Calu3 (cell line): ENCODE measurements at regions of chr17 and their contacts with region 1.

Region 1: GRCh38 chr17:43907425-43907981 is at the start of gene MPP2:
- DNase-seq: peak; percentile 57
- H3K4me3 Mint-ChIP-seq: peak within 1 kb of the TSS; percentile 50
- H3K27ac Mint-ChIP-seq: no peak within 1 kb of the TSS
- H3K4me1 Mint-ChIP-seq: peaks cover 14% of the 10 kb centered on the region
- H3K27me3 Mint-ChIP-seq: peaks cover 73% of the 10 kb centered on the region
- CTCF ChIP-seq: peak; percentile 34
- total RNA-seq, gene MPP2: 5.5 and 6.7 TPM in 2 replicates

Region 2: DNA sequence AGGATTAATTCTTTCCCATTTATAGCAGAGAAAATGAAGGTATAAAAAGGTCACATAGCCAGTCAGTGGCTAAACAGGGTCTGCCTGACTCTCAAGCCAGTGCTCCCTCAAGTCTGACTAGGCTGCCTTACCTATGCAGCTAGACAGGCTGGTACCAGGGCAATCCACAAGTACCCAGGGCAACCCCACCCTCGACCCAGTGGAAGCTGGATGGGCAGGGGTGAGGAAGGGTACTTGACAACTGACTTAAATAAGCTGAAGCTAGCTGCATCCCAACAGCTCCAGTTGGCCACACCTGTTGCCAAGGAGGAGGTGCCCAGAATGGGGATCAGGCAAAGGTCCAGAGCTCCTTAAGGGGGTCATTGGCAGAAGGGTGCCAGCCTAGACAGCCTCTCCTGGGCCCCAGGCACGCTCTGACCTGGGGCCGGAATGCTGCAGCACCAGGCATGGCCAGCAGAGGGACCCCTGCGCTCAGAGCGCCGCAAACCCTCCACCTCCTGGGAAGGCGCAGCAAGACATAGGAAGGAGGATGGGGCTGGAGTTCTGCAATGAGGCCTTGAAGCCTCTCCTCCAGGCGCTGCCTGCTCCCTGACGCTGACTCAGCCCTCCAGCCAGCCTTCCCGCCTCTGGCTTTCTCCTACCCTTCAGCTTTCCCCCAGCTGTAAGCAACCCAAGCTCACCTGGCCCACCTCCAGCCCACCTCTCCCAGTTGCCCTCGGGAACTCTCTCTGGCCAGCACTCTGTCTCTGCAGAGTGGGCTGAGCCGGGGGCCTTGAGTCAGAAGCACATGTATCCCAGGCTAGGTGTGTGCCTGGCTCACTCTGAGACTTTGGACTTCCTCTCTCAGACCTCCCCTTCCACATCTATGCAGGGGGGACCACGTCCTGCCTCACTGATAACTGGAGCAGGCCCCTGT is 29.0 kb before region 1 on chr17:
- CTCF ChIA-PET with region 1: interaction called, 7 read pairs
- intact Hi-C with region 1: loop called (anchors 1 kb)
- DNase-seq: peak; percentile 93
- H3K4me3 Mint-ChIP-seq: no peak overlapping the region
- H3K27ac Mint-ChIP-seq: no peak overlapping the region
- H3K4me1 Mint-ChIP-seq: peaks cover 8% of the 10 kb centered on the region
- H3K27me3 Mint-ChIP-seq: peaks cover 43% of the 10 kb centered on the region
- CTCF ChIP-seq: peak; percentile 98

Region 3: DNA sequence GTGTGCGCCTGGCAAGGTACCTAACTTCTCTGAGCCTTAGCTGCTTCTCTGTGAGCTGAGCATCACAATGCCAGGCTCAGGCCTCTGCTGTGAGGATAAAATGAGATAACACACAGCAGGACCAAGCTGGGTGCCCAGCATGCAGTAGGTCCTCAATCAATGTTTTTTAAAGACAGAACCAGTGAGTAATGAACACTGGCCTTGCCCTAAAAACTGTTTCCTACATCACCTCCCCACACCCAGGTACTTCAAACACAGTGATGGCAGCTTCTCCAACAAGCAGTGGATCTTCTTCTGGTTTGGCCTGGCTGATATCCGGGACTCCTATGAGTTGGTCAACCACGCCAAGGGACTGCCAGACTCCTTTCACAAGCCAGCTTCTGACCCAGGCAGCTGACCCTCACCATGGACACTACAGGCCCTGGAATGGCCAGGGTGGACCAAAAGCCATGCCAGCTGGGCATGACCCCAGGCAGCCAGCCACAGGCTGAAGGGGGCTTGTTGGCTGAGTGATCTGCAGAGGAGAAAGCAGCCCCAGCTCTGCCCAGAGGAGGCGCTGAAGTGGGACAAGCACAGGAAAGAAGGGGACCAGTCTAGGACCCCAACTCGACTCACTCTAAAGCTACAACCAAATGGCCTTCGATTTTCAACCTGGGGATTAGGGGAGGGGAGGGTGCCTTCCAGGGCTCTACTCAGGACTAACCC is 100.9 kb after region 1 on chr17:
- CTCF ChIA-PET with region 1: no interaction called
- intact Hi-C with region 1: no loop called
- DNase-seq: no peak
- H3K4me3 Mint-ChIP-seq: peak overlapping the region; percentile 80
- H3K27ac Mint-ChIP-seq: peak overlapping the region; percentile 65
- H3K4me1 Mint-ChIP-seq: peaks cover 18% of the 10 kb centered on the region
- H3K27me3 Mint-ChIP-seq: peaks cover 34% of the 10 kb centered on the region
- CTCF ChIP-seq: no peak

Region 4: GRCh38 chr17:44363613-44364159 is 456.2 kb after region 1 on chr17 and contains the start of gene FAM171A2:
- CTCF ChIA-PET with region 1: no interaction called
- intact Hi-C with region 1: no loop called
- DNase-seq: peak; percentile 87
- H3K4me3 Mint-ChIP-seq: peak within 1 kb of the TSS; percentile 63
- H3K27ac Mint-ChIP-seq: no peak within 1 kb of the TSS
- H3K4me1 Mint-ChIP-seq: peaks cover 10% of the 10 kb centered on the region
- H3K27me3 Mint-ChIP-seq: peaks cover 87% of the 10 kb centered on the region
- CTCF ChIP-seq: peak; percentile 96
- total RNA-seq, gene FAM171A2: 0.95 and 2.0 TPM in 2 replicates